ENCODE measurements at regions of chr1 and their contacts with region 1.

Region 1: GRCh38 chr1:108199781-108200570 is at the start of gene SLC25A24:
- DNase-seq: peak; percentile 79
- ATAC-seq: peak; percentile 92
- H3K4me3 ChIP-seq: peak within 1 kb of the TSS; percentile 97
- H3K27ac ChIP-seq: peak within 1 kb of the TSS; percentile 59
- H3K4me1 ChIP-seq: peaks cover 19% of the 10 kb centered on the region
- H3K27me3 ChIP-seq: no peaks in the 10 kb centered on the region
- CTCF ChIP-seq: no peak
- total RNA-seq, gene SLC25A24: 30.3 and 33.4 TPM in 2 replicates

Region 2: DNA sequence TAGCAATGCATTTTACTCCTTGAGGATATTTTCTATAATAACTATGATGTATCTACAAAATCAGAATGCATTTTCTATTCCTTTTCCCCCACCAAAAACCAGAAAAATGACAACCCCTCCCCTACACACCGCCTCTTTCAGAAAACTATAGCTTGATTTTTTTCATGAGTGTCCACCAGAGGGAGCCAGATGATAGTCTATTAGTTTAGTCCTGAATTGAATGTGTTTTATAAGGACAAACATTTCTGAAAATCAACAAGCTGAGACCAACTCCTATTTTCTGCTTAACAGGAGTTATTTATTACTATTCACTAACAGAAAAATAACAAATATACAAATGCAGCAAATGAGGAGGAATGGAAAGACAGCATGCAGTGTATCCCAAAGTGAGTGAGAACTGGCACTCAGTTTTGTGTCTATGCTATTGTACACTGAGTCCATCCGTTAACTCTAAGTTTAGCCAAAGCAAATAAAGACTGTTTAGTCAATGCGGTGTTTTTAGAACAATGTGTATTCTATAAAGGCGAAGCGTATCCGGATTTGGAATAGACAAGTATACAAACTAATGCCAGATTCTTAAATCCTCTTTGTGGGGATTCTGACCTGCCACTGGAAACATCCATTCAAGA is 417.6 kb before region 1 on chr1:
- CTCF ChIA-PET with region 1: interaction called, 11 read pairs
- POLR2A ChIA-PET with region 1: no interaction called
- intact Hi-C with region 1: loop called (anchors 5 kb)
- DNase-seq: peak; percentile 76
- ATAC-seq: peak; percentile 86
- H3K4me3 ChIP-seq: no peak overlapping the region
- H3K27ac ChIP-seq: no peak overlapping the region
- H3K4me1 ChIP-seq: peaks cover 7% of the 10 kb centered on the region
- H3K27me3 ChIP-seq: no peaks in the 10 kb centered on the region
- CTCF ChIP-seq: peak; percentile 88

Region 3: DNA sequence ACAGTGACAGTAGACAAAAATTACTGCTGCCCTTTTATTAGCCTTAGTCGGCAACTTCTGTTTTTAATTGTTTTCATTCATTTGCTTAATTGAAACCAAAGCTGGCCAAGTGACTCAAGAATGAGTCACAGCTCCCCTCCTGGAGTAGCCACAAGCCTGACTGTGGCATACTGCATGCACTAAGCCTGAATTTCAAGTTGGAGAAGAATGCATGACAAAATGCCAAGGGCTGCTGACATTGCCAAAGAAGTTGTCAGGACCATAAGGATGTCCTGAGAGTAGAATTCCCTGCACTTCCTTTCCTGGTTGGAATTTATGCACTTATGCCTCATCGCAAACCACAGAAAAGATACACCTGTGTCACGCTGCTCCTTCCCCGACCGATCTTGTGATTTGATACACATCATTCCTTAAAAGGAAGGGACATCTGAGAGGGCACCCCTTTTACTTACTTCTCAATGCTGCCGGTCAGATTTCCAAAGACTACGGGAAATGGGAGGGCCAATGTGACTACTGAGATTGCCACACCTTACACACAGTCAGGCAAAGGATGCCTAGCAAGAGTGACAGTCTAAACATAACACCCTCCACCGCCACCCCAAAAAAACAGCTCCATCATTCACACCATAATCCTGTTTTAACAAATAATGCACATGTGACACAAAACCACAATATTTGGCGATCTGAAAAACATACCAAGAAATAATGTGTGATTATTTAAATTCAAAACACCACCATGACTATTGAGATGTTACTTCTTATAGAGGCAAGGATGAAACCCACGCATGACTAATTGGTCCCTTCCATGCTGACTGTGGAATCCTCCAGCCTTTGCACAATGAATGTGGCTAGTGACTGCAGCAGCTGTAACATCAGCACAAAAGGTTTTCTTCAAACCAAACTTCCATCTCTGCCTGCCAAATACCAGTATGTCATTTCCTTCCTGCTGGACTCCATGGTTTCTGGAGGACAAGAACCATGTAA is 263.2 kb before region 1 on chr1:
- CTCF ChIA-PET with region 1: no interaction called
- POLR2A ChIA-PET with region 1: no interaction called
- intact Hi-C with region 1: loop called (anchors 1 kb)
- DNase-seq: peak; percentile 99
- ATAC-seq: peak; percentile 94
- H3K4me3 ChIP-seq: peak overlapping the region; percentile 2; the same call in 1 of the 2 replicates
- H3K27ac ChIP-seq: peak overlapping the region; percentile 65
- H3K4me1 ChIP-seq: peaks cover 28% of the 10 kb centered on the region
- H3K27me3 ChIP-seq: no peaks in the 10 kb centered on the region
- CTCF ChIP-seq: no peak

Region 4: DNA sequence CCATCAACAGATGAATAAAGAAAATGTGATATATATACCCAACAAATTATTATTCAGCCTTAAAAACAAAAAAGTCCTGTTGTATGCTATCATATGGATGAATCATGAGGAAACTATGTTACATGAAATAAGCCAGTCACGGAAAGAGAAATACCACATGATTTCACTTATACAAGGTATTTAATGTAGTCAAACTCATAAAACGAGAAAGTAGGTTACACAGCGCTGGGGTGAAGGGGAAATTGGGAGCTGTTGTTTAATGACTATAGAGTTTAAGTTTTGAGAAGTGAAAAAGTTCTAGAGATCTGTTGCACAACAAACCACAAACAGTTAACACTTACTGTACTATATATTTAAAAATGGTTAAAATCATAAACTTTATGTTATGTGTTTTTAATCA is 58.4 kb before region 1 on chr1:
- CTCF ChIA-PET with region 1: no interaction called
- POLR2A ChIA-PET with region 1: no interaction called
- intact Hi-C with region 1: loop called (anchors 10 kb)
- DNase-seq: peak; percentile 89
- ATAC-seq: peak; percentile 77
- H3K4me3 ChIP-seq: no peak overlapping the region
- H3K27ac ChIP-seq: peak overlapping the region; percentile 48
- H3K4me1 ChIP-seq: peaks cover 34% of the 10 kb centered on the region
- H3K27me3 ChIP-seq: no peaks in the 10 kb centered on the region
- CTCF ChIP-seq: no peak

Region 5: DNA sequence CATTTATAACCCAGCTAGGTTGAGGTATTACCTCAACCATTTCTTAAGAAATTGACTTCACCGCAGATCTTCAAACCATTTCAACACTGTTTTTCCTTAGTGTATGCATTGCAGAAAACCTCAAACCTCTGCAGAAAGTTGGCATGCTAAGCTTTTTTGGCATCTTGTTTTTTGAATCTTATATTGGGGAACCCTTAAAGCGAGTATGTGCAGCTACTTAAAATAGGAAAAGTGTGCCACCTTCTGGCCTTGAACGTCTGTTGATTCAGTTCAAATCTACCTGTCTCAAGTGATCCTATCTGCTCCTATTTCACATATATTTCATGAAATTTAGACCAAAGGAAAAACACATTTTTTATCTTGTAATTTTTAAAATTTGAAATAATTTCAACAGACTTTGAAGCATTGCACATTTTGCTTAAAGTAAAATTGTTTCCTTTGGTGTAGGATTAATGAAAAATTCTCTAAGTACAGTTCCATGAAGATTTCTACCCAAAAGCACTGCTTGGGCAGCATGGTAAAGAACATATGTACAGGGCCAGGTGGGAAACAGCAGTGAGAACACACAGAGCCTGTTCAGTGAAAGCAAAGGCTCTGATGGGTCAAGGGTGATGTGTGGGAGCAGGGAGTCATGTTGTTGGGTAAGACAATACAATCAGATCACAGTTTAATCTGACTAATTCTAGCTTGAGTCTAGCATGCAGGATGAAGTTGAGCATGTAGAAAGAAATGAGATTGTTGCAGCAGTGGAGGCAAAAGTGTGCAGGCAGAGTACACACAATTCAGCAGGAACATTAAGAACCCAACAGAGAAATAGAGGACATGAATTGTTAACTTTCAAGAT is 443.7 kb after region 1 on chr1:
- CTCF ChIA-PET with region 1: no interaction called
- POLR2A ChIA-PET with region 1: no interaction called
- intact Hi-C with region 1: loop called (anchors 5 kb)
- DNase-seq: peak; percentile 75
- ATAC-seq: peak; percentile 88
- H3K4me3 ChIP-seq: no peak overlapping the region
- H3K27ac ChIP-seq: no peak overlapping the region
- H3K4me1 ChIP-seq: peaks cover 8% of the 10 kb centered on the region
- H3K27me3 ChIP-seq: no peaks in the 10 kb centered on the region
- CTCF ChIP-seq: peak; percentile 89